HEK293T (cell line): ENCODE measurements at regions of chr10 and their contacts with region 1.

Region 1: GRCh38 chr10:3222065-3222464 is 49.5 kb upstream of the PITRM1 start:
- DNase-seq: no peak

Region 2: DNA sequence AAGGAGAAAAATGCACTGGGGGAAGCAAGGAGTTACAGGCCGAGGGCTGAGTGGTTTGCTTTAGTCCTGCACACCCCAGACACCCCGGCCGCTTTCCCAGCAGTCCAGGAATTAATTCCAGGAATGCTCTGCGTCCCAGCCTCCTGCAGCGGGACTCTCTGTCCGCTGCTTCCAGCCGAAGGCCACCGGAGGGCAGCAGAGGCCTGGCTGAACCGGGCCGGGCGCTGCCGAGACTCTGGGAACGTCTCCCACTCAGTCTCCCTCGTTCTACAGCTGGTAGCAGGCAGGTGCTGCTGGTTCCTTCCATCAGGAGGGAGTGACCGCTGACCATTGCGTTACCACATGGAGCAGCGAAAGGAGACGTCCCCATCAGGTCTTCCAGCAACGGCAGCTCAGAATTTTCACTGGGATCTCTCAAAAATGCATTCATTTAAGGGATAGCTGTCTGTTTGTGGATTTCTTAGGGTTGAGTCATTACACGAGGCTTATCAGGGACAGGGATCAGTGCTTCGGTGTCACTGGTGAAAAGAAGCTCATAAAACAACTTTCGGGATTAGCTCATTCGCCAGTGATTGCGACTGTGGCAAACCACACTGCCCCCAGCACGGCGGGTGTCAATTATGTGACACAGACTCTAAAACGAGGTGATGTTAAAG is 24.6 kb before region 1 on chr10:
- CTCF ChIA-PET with region 1: interaction called, 16 read pairs
- POLR2A ChIA-PET with region 1: interaction called, 4 read pairs
- DNase-seq: peak; percentile 87

Region 3: GRCh38 chr10:3339531-3339950 is 117.5 kb after region 1 on chr10:
- CTCF ChIA-PET with region 1: no interaction called
- POLR2A ChIA-PET with region 1: no interaction called
- DNase-seq: no peak